K562 (cell line): ENCODE measurements at regions of chr2 and their contacts with region 1.

Region 1: DNA sequence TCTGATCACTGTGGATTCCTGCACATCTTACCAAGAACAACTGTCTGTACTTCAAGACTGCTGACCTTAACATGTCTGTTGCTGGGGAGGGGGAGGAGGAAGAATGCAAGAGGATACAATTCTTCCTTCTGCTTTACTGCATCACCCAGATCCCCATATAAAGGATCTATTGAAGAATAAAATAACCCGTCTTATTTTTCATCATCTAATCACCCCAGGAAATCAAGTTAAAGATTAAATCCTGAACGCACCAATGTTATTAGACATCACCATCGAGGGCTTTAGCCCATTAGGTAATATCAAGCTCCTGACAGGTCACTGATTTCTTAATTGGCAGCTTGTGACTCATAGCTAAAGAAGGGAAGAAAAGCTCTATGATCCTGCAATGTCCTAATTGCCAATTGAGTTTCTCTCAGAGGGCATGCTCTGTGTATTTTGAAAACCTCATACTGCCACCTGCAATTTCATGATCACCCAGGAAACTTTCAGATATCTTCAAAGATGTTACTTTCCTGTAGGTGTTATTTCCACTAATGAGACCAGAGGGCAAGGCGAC is 75.4 kb upstream of the KCNE4 start:
- DNase-seq: no peak
- ATAC-seq: no peak
- H3K4me3 ChIP-seq: no peak overlapping the region
- H3K27ac ChIP-seq: no peak overlapping the region
- H3K4me1 ChIP-seq: no peaks in the 10 kb centered on the region
- H3K27me3 ChIP-seq: 0 out of 5 replicates have a peak, but pooled peaks cover 0 to 4% of the 10 kb centered on the region in 2 experiments
- CTCF ChIP-seq: no peak
- EP300 ChIP-seq: no peak
- POLR2A ChIP-seq: no peak
- RAD21 ChIP-seq: no peak

Region 2: DNA sequence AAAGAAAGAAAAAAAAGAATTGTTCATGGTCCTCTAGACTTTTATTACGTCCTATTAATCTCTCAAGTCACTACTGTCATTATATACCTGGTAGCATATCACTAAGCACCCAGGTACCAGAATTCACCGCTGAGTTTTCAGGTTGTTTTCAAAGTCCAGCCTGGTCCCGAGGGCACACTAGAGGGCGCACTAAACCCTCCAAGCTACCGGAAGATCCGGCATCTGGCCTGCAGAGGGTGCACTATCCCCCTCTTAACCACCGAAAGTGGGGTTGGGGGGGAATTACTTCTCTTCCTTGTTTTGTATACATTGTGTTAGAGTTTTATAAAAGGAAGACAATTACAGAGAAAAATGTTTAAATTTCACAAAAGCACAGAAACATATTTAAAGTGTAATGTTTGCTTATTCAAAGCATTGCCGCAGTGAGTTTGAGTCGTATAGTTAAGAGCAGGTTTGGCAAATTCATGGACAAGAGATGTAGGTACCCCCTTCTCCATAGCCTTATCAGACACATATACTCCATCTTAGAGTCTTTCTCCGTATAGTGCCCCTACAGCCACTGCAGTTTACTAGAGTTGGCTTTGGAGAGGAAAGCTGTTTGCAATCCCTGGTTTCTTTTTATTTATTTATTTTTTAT is 285.9 kb before region 1 on chr2:
- CTCF ChIA-PET with region 1: no interaction called
- POLR2A ChIA-PET with region 1: no interaction called
- in situ Hi-C with region 1: no loop called
- intact Hi-C with region 1: loop called (anchors 5 kb)
- DNase-seq: peak; percentile 81 to 86 (median 82)
- ATAC-seq: peak; percentile 98
- H3K4me3 ChIP-seq: no peak overlapping the region
- H3K27ac ChIP-seq: no peak overlapping the region
- H3K4me1 ChIP-seq: peaks cover 0 to 4% of the 10 kb centered on the region in 2 experiments; a peak in 1 of 5 replicates
- H3K27me3 ChIP-seq: no peaks in the 10 kb centered on the region
- CTCF ChIP-seq: peak; percentile 99 to 100 (median 100)
- EP300 ChIP-seq: no peak
- POLR2A ChIP-seq: no peak
- RAD21 ChIP-seq: peak; percentile 72 to 90

Region 3: GRCh38 chr2:222707689-222708525 is 268.7 kb before region 1 on chr2:
- CTCF ChIA-PET with region 1: no interaction called
- POLR2A ChIA-PET with region 1: no interaction called
- in situ Hi-C with region 1: no loop called
- intact Hi-C with region 1: no loop called
- DNase-seq: peak; percentile 35 to 79 (median 38)
- ATAC-seq: peak; percentile 72
- H3K4me3 ChIP-seq: no peak overlapping the region
- H3K27ac ChIP-seq: no peak overlapping the region
- H3K4me1 ChIP-seq: no peaks in the 10 kb centered on the region; a peak in 2 of 5 replicates
- H3K27me3 ChIP-seq: no peaks in the 10 kb centered on the region
- CTCF ChIP-seq: peak; percentile 71 to 73 (median 71)
- EP300 ChIP-seq: no peak
- POLR2A ChIP-seq: no peak
- RAD21 ChIP-seq: peak; percentile 78

Region 4: DNA sequence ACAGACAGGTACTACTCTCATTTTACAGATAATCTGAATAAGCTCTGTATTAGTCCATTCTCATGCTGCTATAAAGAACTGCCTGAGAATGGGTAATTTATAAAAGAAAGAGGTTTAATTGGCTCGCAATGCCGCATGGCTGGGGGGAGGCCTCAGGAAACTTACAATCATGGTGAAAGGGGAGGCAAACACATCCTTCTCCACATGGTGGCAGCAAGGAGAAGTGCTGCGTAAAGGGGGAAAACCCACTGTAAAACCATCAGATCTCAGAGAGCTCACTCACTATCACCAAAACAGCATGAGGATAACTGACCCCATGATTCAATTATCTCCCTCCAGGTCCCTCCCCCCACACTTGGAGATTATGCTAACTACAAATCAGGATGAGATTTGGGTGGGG is 329.8 kb after region 1 on chr2:
- CTCF ChIA-PET with region 1: no interaction called
- POLR2A ChIA-PET with region 1: no interaction called
- in situ Hi-C with region 1: no loop called
- intact Hi-C with region 1: loop called (anchors 10 kb)
- DNase-seq: peak in 1 of 4 experiments; percentile 11
- ATAC-seq: no peak
- H3K4me3 ChIP-seq: no peak overlapping the region
- H3K27ac ChIP-seq: no peak overlapping the region
- H3K4me1 ChIP-seq: no peaks in the 10 kb centered on the region
- H3K27me3 ChIP-seq: no peaks in the 10 kb centered on the region
- CTCF ChIP-seq: peak; percentile 12 to 27 (median 15); a peak in 1 of 6 replicates
- EP300 ChIP-seq: no peak
- POLR2A ChIP-seq: no peak
- RAD21 ChIP-seq: no peak

Region 5: GRCh38 chr2:223797811-223798721 is 821.5 kb after region 1 on chr2:
- CTCF ChIA-PET with region 1: interaction called, 7 read pairs
- POLR2A ChIA-PET with region 1: no interaction called
- in situ Hi-C with region 1: loop called (anchors 25 kb)
- intact Hi-C with region 1: loop called (anchors 5 kb)
- DNase-seq: peak in 1 of 4 experiments; percentile 17
- ATAC-seq: peak; percentile 53; the same call in 1 of the 3 replicates
- H3K4me3 ChIP-seq: no peak overlapping the region
- H3K27ac ChIP-seq: no peak overlapping the region
- H3K4me1 ChIP-seq: no peaks in the 10 kb centered on the region
- H3K27me3 ChIP-seq: no peaks in the 10 kb centered on the region; a peak in 1 of 5 replicates
- CTCF ChIP-seq: peak; percentile 39 to 61 (median 41); a peak in 4 of 6 replicates
- EP300 ChIP-seq: no peak
- POLR2A ChIP-seq: no peak
- RAD21 ChIP-seq: peak; percentile 62 to 73